ENCODE measurements at regions of chr4 and their contacts with region 1.

Region 1: DNA sequence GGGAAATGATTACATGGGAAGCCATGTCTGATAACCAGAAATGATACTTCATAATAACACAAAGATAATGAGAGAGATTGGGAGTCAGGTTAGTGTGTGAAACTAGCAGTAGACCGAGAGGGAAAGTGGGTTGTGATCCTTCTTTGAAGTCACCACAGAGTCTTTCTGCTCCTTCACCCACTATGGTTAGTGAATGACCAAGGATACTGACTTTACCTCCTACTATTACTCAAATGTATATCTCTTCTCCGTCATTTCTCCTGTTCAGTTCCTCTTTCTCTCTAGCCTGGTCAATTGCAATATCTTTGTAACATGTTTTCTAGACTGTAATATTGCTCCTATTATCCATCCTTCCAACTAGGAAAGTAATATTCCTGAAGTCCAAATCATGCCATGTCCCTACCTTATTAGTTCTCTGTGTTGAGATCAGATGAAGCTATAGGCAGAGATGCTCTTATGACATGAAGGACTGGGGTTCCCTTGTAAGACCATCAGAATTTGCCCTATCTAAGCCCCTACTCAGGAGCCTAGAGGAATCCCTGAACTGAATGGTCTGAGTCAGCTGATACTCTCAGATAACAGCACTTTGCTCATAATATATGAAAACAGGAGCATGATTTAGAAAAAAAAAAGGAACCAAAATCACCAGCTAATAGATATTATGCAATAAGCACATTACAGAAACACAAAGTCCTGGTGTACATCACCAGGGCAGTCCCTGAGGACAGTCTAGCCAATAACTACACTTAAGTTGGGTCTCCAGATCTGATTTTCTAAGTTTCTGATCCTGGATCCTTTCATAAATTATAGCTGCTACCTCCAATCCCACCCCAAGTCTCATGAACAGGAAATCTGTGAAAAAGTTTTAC is 81.2 kb downstream of the SHROOM3 start:
- DNase-seq: no peak

Region 2: GRCh38 chr4:75831856-75832405 is 684.3 kb before region 1 on chr4:
- intact Hi-C with region 1: no loop called
- DNase-seq: no peak

Region 3: DNA sequence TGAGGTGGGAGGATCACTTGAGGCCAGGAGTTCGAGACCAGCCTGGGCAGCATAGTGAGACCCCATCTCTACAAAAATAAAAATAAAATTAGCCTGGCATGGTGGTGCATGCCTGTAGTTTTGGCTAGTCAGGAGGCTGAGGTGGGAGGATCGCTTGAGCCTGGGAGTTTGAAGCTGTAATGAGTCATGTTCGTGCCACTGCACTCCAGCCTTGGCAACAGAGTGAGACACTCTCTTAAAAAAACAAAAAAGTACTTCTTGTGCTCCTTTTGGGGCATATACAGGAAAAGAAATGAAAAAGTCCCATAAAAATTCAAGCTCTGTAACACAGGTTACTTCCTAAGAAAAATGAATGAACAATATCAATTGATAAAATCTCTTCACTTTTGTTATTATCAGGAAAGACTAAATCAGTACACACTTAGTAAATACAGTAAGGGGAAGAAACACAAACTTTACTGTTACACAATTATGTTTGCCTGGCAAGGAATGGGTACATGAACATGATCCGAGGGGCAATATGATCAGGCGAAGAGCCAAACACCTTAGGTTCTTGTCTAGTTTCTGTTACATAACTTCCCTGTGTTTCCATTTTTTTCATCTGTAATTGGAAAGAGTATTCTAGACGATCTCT is 142.2 kb before region 1 on chr4:
- intact Hi-C with region 1: no loop called
- DNase-seq: no peak

Region 4: GRCh38 chr4:76658231-76659102 is 142.3 kb after region 1 on chr4:
- intact Hi-C with region 1: loop called (anchors 5 kb)
- DNase-seq: no peak

Region 5: GRCh38 chr4:76758290-76758882 is 242.2 kb after region 1 on chr4:
- intact Hi-C with region 1: loop called (anchors 1 kb)
- DNase-seq: no peak

Region 6: DNA sequence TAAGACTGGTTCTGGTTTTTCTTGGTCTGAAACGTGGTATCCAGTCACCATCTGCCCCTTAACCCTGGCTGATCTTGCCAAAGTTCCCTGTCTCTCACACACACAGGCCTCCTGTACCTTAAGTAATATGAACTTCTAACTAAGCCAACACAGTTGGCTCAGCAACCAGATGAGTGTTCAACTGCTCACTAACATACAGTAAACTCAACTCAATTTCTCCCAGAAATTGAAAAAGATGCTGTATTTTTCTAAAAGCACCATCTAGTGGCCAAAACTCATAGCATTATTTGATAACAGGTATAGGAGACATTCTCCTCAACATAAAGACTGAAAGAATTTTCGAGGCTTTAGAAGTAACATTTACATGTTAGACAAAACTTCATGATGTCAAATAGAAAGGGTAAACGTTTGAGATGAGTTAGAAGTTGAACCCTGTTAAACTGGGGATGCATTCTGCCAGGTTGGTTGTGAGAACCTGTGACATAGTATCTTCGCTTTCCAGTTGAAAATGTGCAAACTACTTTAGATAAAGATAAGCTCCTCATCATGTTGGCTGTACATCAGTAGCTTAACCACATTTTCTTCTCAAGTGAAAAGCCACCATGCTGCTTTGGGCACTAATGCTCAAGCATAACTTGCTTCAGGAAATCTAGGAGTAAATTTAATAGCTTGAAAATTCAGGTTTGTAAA is 528.4 kb after region 1 on chr4:
- intact Hi-C with region 1: loop called (anchors 10 kb)
- DNase-seq: no peak

Region 7: DNA sequence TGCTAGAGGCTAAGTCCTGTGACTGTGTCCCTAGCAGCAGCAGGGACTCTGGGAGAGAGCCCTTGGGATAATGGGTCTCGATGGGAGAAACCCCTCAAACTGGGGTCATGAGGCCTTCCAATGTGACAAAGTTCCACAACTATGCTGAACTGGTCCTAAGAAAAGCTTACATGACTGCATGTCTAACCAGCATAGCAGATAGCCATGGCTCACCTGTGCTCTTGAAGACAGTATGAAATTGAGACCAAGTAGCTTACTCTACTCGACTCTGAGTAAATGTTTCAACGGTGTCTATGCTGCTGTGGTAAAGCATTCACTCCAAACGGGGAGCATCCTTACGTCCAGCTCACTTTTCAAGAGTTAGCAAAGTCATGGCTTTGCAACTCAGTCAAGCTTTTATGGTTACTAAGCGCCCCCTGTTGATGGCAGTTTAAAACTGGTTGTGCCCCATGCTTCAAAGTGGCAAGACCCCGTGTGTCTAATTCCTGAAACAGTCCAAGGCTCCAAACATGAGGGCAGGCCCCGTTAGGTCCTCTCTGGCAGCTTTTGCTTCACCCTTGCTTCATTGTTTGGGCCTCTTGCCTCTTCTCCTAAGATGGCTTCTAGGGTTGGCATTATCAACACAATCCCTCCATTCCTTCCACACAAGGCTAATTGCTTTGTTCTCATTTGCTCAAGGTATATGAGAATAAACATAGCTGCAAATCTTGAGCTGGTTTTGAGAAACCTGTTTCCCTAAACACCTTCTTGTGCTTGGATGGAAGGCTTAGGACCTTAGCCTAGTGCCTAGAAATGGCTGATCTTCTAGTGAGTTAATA is 687.4 kb after region 1 on chr4:
- intact Hi-C with region 1: loop called (anchors 2 kb)
- DNase-seq: no peak